ENCODE measurements at regions of chr14 and their contacts with region 1.

Region 1: GRCh38 chr14:75176142-75176820 is at the start of gene TMED10:
- DNase-seq: peak; percentile 95
- ATAC-seq: peak; percentile 81
- H3K4me3 Mint-ChIP-seq: peak within 1 kb of the TSS; percentile 94
- H3K27ac Mint-ChIP-seq: peak within 1 kb of the TSS; percentile 95
- H3K4me1 Mint-ChIP-seq: peaks cover 39% of the 10 kb centered on the region
- H3K27me3 Mint-ChIP-seq: no peaks in the 10 kb centered on the region
- total RNA-seq, gene TMED10: 179 to 253 TPM

Region 2: DNA sequence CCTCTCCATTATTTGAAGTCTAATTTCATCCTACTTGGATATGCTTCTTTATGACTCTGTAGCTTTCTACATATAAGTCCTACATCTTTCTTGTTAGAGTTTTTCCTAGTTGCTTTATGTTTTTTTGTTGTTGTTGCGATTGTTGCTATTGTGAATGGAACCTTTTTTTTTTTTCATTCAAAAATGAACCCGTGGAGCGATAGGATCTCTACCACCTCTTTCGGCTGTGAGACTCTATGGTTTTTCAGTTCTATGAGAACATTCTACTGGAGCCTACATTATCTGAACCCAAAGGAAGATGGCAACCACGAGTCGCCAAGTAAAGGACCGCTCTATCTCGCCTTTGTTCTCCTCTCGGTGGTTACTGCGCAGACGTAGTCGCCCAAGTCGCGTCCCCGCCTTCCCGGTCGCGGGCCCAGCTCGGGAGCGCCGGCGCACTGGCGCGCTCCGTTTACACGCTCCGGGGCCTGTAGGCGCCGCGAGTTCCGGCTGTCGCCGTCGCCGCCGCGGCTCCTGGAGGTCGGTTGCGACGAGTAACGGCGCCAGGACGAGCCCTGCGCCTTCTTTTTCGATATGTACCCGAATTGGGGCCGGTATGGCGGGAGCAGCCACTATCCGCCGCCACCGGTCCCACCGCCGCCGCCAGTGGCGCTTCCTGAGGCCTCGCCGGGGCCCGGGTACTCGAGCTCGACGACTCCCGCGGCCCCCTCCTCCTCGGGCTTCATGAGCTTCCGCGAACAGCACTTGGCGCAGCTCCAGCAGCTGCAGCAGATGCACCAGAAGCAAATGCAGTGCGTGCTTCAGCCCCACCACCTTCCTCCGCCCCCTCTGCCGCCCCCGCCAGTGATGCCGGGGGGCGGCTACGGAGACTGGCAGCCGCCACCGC is 413.1 kb before region 1 on chr14 and contains the start of gene YLPM1:
- CTCF ChIA-PET with region 1: no interaction called
- POLR2A ChIA-PET with region 1: no interaction called
- intact Hi-C with region 1: loop called in 1 of 2 experiments (anchors 2 kb)
- DNase-seq: peak; percentile 95
- ATAC-seq: peak; percentile 92
- H3K4me3 Mint-ChIP-seq: peak within 1 kb of the TSS; percentile 96
- H3K27ac Mint-ChIP-seq: peak within 1 kb of the TSS; percentile 97
- H3K4me1 Mint-ChIP-seq: peaks cover 42% of the 10 kb centered on the region
- H3K27me3 Mint-ChIP-seq: no peaks in the 10 kb centered on the region
- total RNA-seq, gene YLPM1: 53.0 to 60.9 TPM

Region 3: DNA sequence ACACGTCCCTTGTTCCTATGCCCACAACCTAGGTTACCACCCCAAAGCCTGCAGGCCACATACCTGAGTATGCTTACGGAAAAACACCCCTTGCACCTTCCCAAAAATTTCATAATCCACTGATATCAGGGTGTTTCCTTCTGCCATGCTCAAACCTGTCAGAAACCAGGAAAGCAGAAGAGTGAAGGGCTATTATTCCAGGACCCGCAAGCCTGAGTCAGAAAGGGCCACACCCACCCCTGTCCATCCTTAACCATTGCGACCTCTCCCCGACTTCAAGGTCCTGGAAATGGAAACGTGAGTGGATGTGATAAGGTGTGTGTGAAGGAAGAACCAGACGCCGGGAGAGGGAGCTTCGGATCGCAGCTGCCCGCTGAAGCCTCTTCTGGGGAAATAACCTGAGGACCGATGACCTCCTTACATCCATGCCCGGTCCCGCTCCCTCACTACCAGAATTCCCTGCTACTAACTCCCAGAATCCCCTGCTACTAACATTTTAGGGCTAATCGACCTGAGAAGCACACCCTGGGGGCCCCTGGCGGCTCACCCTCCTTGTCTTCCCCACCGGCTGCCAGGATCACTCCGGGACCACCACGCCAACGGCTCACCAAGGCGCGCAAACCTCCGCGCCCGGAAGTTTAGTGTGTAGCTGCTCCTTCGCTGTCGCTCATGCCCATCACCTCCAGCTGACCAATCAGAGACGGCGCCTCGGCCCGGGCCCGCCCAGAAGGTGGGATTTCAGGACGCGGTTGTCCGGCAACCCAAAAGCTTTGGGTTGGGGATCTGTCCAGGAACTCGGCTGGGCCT is 112.7 kb before region 1 on chr14 and contains the start of gene ACYP1:
- CTCF ChIA-PET with region 1: no interaction called
- POLR2A ChIA-PET with region 1: no interaction called
- intact Hi-C with region 1: loop called in 1 of 2 experiments (anchors 5 kb)
- DNase-seq: peak; percentile 95
- ATAC-seq: peak; percentile 99
- H3K4me3 Mint-ChIP-seq: peak within 1 kb of the TSS; percentile 96
- H3K27ac Mint-ChIP-seq: peak within 1 kb of the TSS; percentile 93
- H3K4me1 Mint-ChIP-seq: peaks cover 27% of the 10 kb centered on the region
- H3K27me3 Mint-ChIP-seq: no peaks in the 10 kb centered on the region
- total RNA-seq, gene ACYP1: 37.0 to 40.2 TPM

Region 4: DNA sequence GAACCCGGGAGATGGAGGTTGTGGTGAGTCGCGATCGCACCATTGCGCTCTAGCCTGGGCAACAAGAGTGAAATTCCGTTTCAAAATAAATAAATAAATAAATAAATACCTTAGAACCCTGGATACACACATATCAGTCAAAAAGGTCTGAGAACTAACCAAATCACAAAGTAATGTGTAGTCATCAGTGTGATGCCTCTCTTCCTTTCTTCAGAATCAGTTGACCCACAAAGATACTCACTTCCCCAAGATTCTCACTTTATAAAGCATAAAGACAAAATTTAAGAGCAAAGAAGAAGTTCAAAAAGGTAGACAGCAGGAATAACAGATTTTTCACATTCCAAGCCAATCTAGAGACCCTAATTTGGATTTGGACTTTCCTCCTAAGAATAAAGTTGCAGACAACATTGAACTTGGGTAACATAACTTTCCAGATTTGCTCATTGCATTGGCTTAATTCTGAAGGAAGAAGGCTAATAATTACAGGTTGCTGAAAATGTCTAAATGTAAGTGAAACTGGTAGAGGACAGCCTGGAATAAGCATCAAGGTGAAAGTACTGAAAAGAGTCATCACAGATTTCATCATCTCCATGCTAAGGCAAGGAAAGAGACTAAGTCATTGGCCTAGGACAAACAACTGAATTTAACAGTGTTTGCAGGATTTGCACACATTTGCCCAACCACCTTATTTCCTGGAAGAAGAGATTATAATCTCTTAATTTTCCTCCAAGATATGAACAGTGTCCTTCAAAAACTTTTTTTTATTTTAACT is 17.3 kb before region 1 on chr14:
- CTCF ChIA-PET with region 1: interaction called, 4 read pairs
- POLR2A ChIA-PET with region 1: interaction called, 4 read pairs
- intact Hi-C with region 1: loop called (anchors 1 kb)
- DNase-seq: no peak
- ATAC-seq: peak; percentile 86
- H3K4me3 Mint-ChIP-seq: peak overlapping the region; percentile 25
- H3K27ac Mint-ChIP-seq: peak overlapping the region; percentile 93
- H3K4me1 Mint-ChIP-seq: peaks cover 66% of the 10 kb centered on the region
- H3K27me3 Mint-ChIP-seq: no peaks in the 10 kb centered on the region

Region 5: GRCh38 chr14:75258615-75259466 is 82.6 kb after region 1 on chr14:
- CTCF ChIA-PET with region 1: interaction called, 5 read pairs
- POLR2A ChIA-PET with region 1: interaction called, 6 read pairs
- intact Hi-C with region 1: loop called (anchors 1 kb)
- DNase-seq: peak; percentile 99
- ATAC-seq: peak; percentile 98
- H3K4me3 Mint-ChIP-seq: peak overlapping the region; percentile 77
- H3K27ac Mint-ChIP-seq: peak overlapping the region; percentile 97
- H3K4me1 Mint-ChIP-seq: peaks cover 24% of the 10 kb centered on the region
- H3K27me3 Mint-ChIP-seq: no peaks in the 10 kb centered on the region

Region 6: GRCh38 chr14:75514673-75515628 is 338.7 kb after region 1 on chr14:
- CTCF ChIA-PET with region 1: no interaction called
- POLR2A ChIA-PET with region 1: no interaction called
- intact Hi-C with region 1: no loop called
- DNase-seq: peak; percentile 65
- ATAC-seq: peak; percentile 28
- H3K4me3 Mint-ChIP-seq: peak overlapping the region; percentile 72
- H3K27ac Mint-ChIP-seq: peak overlapping the region; percentile 96
- H3K4me1 Mint-ChIP-seq: peaks cover 57% of the 10 kb centered on the region
- H3K27me3 Mint-ChIP-seq: no peaks in the 10 kb centered on the region

Region 7: GRCh38 chr14:75542588-75543091 is 366.4 kb after region 1 on chr14:
- CTCF ChIA-PET with region 1: no interaction called
- POLR2A ChIA-PET with region 1: no interaction called
- intact Hi-C with region 1: loop called in 1 of 2 experiments (anchors 5 kb)
- DNase-seq: peak; percentile 95
- ATAC-seq: peak; percentile 86
- H3K4me3 Mint-ChIP-seq: peak overlapping the region; percentile 59
- H3K27ac Mint-ChIP-seq: peak overlapping the region; percentile 98
- H3K4me1 Mint-ChIP-seq: peaks cover 85% of the 10 kb centered on the region
- H3K27me3 Mint-ChIP-seq: no peaks in the 10 kb centered on the region

Region 8: GRCh38 chr14:75982266-75983018 is 806.2 kb after region 1 on chr14:
- CTCF ChIA-PET with region 1: no interaction called
- POLR2A ChIA-PET with region 1: no interaction called
- intact Hi-C with region 1: loop called in 1 of 2 experiments (anchors 10 kb)
- DNase-seq: peak; percentile 86
- ATAC-seq: peak; percentile 62
- H3K4me3 Mint-ChIP-seq: peak overlapping the region; percentile 67
- H3K27ac Mint-ChIP-seq: peak overlapping the region; percentile 78
- H3K4me1 Mint-ChIP-seq: peaks cover 42% of the 10 kb centered on the region
- H3K27me3 Mint-ChIP-seq: no peaks in the 10 kb centered on the region